Endothelial cell of umbilical vein (primary cell): ENCODE measurements at regions of chr10 and their contacts with region 1.

Region 1: DNA sequence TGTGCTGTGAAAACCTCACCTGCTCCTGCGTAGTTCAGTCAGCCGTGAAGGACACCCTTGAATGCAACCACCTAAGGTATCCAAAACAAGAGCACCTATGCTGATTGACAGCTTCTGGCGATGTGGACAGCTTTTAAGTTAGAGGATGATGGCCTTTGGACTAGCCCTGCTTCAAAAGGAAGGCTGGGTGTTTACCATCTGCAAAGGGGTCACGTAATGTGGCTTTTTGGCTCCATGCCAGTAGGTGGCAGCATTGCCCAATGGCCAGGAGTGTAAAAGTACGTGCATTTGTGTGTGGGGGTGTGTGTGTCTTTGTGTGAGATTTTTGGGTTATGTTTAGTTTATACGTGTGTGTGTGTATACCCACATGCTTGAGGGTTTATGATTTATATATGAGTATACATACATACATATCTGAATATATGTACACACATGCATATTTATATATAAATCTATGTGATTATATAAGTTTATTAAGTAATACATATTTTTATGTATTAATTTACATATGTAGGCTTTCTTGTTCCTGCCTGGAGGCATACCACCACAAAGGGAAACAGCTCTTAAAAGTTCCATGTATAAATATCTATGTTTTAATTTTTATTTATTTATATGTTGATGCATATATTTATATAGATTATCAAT is 236.3 kb upstream of the ANKRD30A start:
- DNase-seq: peak; percentile 13
- H3K4me3 ChIP-seq: no peak overlapping the region
- H3K27ac ChIP-seq: no peak overlapping the region
- H3K4me1 ChIP-seq: no peaks in the 10 kb centered on the region
- H3K27me3 ChIP-seq: no peaks in the 10 kb centered on the region
- CTCF ChIP-seq: peak; percentile 13 to 24
- POLR2A ChIP-seq: no peak

Region 2: GRCh38 chr10:35574924-35575352 is 1314.1 kb before region 1 on chr10:
- CTCF ChIA-PET with region 1: no interaction called
- POLR2A ChIA-PET with region 1: no interaction called
- dilution Hi-C with region 1: no loop called
- intact Hi-C with region 1: loop called (anchors 10 kb)
- DNase-seq: peak; percentile 85
- H3K4me3 ChIP-seq: no peak overlapping the region
- H3K27ac ChIP-seq: peak overlapping the region; percentile 65
- H3K4me1 ChIP-seq: peaks cover 31% of the 10 kb centered on the region
- H3K27me3 ChIP-seq: no peaks in the 10 kb centered on the region
- CTCF ChIP-seq: peak; percentile 32 to 36
- POLR2A ChIP-seq: no peak